Activated CD4-positive, alpha-beta T cell treated with anti-CD3 and anti-CD28 coated beads, Interleukin-2, amount 10 ng/mL, durations not matched to agents 24 days and 14 days (primary cell): ENCODE measurements at regions of chr5 and their contacts with region 1.

Region 1: DNA sequence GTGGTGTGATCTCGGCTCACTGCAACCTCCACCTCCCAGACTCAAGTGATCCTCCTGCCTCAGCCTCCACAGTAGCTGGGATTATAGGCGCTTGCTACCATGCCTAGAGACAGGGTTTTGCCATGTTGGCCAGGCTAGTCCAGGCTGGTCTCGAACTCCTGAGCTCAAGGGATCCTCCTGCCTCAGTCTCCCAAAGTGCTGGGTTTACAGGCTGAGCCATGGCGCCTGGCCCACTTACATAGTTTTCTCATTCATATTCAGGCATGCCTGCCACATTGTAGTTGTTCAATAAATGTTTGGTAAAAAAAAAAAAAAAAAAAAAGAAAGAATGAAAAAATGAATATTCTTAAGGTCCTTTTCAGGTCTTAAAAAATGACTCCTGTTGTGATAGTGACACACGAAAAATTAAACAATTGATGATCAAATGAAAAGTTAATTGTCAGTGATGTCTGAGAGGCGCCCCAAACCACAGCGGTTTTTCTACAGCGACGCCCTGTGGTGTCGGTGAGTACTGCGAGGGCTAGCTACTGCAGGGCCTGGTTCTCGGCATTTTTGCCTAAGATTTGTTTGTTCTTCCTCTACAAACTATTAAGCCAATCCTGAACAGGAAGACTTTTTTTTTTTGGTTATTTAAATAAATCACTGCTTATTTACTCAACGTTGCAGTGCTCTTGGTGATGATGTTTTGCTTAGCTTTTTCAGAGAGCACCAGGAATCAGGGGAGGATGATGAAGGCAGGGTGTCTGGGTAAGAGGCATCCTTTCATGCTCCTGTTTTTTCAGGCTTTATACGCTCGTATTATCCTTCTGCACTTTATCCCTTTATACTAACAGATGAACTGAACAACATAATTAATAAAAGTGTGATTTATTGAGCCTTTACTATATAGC is 67.0 kb upstream of the DPYSL3 start:
- DNase-seq: peak; percentile 82
- H3K4me3 Mint-ChIP-seq: no peak overlapping the region
- H3K27ac Mint-ChIP-seq: no peak overlapping the region
- H3K4me1 Mint-ChIP-seq: no peaks in the 10 kb centered on the region
- H3K27me3 Mint-ChIP-seq: no peaks in the 10 kb centered on the region

Region 2: GRCh38 chr5:147055850-147056566 is 520.9 kb before region 1 on chr5:
- intact Hi-C with region 1: no loop called
- DNase-seq: no peak
- H3K4me3 Mint-ChIP-seq: no peak overlapping the region
- H3K27ac Mint-ChIP-seq: no peak overlapping the region
- H3K4me1 Mint-ChIP-seq: no peaks in the 10 kb centered on the region
- H3K27me3 Mint-ChIP-seq: peaks cover 2% of the 10 kb centered on the region

Region 3: GRCh38 chr5:147453875-147454814 is 122.7 kb before region 1 on chr5:
- intact Hi-C with region 1: loop called (anchors 2 kb)
- DNase-seq: peak; percentile 92
- H3K4me3 Mint-ChIP-seq: peak overlapping the region; percentile 81
- H3K27ac Mint-ChIP-seq: peak overlapping the region; percentile 20
- H3K4me1 Mint-ChIP-seq: peaks cover 7% of the 10 kb centered on the region
- H3K27me3 Mint-ChIP-seq: peaks cover 53% of the 10 kb centered on the region